ENCODE measurements at regions of chr9 and their contacts with region 1.

Region 1: DNA sequence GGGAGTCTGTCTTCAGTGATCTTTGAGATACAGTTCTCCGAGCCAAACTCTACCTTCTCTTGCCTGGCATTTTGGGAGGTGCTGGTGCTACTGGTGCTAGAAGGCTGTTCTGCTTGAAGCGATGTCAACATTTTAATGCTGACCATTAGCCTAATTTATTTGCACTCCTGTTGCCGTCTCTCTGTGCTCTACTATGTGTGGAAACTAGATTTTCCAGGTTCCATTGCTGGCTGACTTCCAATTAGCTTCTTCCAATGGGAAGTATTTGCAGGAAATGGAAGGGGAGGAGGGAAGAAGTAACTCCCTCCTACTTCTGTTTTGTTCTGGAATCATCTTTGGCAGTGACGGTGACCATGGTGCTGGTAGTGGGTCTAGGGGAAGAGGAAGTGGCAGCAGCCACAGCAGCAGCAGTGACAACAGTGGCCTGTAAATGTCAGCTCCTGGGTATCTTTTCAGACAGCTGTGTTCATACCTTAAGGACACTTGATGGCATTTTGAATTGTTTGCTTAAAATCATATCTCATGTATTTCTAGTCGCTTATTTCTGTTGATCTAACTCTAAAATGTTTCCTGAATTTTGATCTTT is 7.9 kb downstream of the TXNDC8 start:
- DNase-seq: no peak
- ATAC-seq: no peak
- H3K4me3 ChIP-seq: no peak overlapping the region
- H3K27ac ChIP-seq: no peak overlapping the region
- H3K4me1 ChIP-seq: no peaks in the 10 kb centered on the region
- H3K27me3 ChIP-seq: no peaks in the 10 kb centered on the region
- CTCF ChIP-seq: no peak
- POLR2A ChIP-seq: no peak
- RAD21 ChIP-seq: no peak

Region 2: GRCh38 chr9:110316261-110317075 is 13.3 kb before region 1 on chr9:
- CTCF ChIA-PET with region 1: no interaction called
- POLR2A ChIA-PET with region 1: no interaction called
- RAD21 ChIA-PET with region 1: no interaction called
- intact Hi-C with region 1: no loop called
- DNase-seq: no peak
- ATAC-seq: no peak
- H3K4me3 ChIP-seq: no peak overlapping the region
- H3K27ac ChIP-seq: no peak overlapping the region
- H3K4me1 ChIP-seq: no peaks in the 10 kb centered on the region
- H3K27me3 ChIP-seq: no peaks in the 10 kb centered on the region
- CTCF ChIP-seq: no peak
- POLR2A ChIP-seq: no peak
- RAD21 ChIP-seq: no peak

Region 3: GRCh38 chr9:110389148-110389750 is 59.5 kb after region 1 on chr9:
- CTCF ChIA-PET with region 1: no interaction called
- POLR2A ChIA-PET with region 1: no interaction called
- RAD21 ChIA-PET with region 1: no interaction called
- intact Hi-C with region 1: loop called (anchors 5 kb)
- DNase-seq: no peak
- ATAC-seq: no peak
- H3K4me3 ChIP-seq: no peak overlapping the region
- H3K27ac ChIP-seq: no peak overlapping the region
- H3K4me1 ChIP-seq: no peaks in the 10 kb centered on the region
- H3K27me3 ChIP-seq: no peaks in the 10 kb centered on the region
- CTCF ChIP-seq: no peak
- POLR2A ChIP-seq: no peak
- RAD21 ChIP-seq: no peak